ENCODE measurements at regions of chr12 and their contacts with region 1.

Region 1: DNA sequence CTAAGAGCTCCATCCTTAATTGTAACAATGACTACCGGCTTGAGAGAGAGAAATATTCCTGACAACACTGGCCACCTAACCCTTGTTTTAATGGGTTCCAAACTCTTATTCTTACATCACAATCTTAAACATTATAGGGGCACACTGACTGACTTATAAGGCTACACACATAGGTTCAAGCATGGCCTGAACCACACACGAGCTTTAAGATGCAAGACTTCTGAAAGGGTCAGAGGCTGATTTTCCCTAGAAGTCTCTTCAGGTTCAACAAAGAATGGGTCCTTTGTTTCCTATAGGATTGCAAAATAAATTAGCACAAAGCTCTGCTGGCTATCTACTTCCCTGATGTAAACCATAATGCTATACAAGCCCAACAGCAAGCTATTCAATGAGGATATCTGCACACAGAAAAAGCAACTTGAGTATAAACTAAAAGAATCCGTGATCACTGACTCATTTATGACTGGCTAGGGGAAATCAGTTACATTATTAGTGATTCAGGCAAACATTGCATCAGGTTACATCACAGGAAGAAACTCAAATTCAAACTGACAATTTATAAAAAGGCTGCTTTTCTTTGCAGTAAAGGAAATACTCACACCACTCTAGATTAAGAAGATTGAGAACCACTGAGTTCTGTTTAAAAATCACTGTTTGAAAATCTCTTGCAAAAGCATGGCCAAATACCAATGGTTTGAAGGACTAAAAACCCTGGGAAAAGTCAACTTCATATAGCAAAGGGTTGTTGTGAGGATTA is 8.5 kb downstream of the BTG1 start:
- DNase-seq: no peak
- ATAC-seq: no peak
- H3K4me3 Mint-ChIP-seq: peak overlapping the region; percentile 98
- H3K27ac Mint-ChIP-seq: peak overlapping the region; percentile 69
- H3K4me1 Mint-ChIP-seq: peaks cover 78% of the 10 kb centered on the region
- H3K27me3 Mint-ChIP-seq: no peaks in the 10 kb centered on the region
- CTCF ChIP-seq: no peak

Region 2: GRCh38 chr12:91811481-91812287 is 325.5 kb before region 1 on chr12:
- CTCF ChIA-PET with region 1: interaction called, 36 read pairs
- POLR2A ChIA-PET with region 1: interaction called, 4 read pairs
- intact Hi-C with region 1: no loop called
- DNase-seq: peak; percentile 57
- ATAC-seq: peak; percentile 71
- H3K4me3 Mint-ChIP-seq: no peak overlapping the region
- H3K27ac Mint-ChIP-seq: no peak overlapping the region
- H3K4me1 Mint-ChIP-seq: peaks cover 7% of the 10 kb centered on the region
- H3K27me3 Mint-ChIP-seq: no peaks in the 10 kb centered on the region
- CTCF ChIP-seq: no peak

Region 3: DNA sequence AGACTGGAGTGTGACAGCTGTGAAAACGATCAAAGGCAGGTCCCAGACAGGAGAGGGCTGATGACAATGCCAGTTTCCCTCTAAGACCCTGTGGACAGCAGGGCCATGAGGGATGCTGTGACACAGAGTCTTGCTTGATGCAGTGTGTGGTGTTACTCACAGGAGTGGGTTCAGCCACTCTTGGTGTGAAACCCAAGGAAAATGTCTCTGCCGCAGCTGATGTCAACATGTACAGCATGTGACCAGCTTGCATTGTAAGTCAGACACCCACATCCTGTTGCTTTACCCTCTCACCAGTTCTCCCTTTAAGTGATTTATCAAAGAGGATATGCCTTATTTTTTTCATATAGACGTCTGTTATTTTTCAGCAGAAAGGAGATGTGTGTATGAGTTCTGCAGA is 260.1 kb before region 1 on chr12:
- CTCF ChIA-PET with region 1: no interaction called
- POLR2A ChIA-PET with region 1: interaction called, 3 read pairs
- intact Hi-C with region 1: loop called (anchors 2 kb)
- DNase-seq: peak; percentile 25
- ATAC-seq: peak; percentile 89
- H3K4me3 Mint-ChIP-seq: peak overlapping the region; percentile 50
- H3K27ac Mint-ChIP-seq: peak overlapping the region; percentile 83
- H3K4me1 Mint-ChIP-seq: peaks cover 28% of the 10 kb centered on the region
- H3K27me3 Mint-ChIP-seq: no peaks in the 10 kb centered on the region
- CTCF ChIP-seq: no peak

Region 4: DNA sequence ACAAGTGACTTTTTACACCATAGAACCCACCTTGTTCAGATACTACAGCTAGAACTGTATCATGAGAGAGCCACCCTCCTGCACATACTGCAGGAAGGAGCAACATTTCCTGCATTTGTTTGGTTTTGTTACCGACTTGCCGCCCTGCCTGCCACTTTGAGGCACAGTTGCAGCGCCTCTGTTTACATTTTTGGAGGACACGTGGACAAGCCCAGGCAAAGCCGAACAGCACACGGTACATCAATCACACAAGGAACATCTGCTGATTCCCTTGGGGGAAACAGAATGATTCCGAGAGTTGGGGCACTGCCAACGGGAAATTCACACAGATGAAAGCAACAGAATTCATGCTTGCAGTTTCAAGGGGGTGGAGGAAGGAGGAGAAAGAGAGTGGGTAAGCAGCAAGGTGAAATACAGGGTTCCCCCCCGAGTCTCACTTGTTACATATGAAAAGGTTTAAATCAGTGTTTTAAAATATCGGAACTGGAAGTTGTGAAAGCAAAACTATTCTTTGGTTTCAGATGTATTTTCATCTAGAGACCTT is 102.2 kb before region 1 on chr12:
- CTCF ChIA-PET with region 1: no interaction called
- POLR2A ChIA-PET with region 1: interaction called, 13 read pairs
- intact Hi-C with region 1: loop called (anchors 1 kb)
- DNase-seq: peak; percentile 50
- ATAC-seq: peak; percentile 91
- H3K4me3 Mint-ChIP-seq: peak overlapping the region; percentile 67
- H3K27ac Mint-ChIP-seq: peak overlapping the region; percentile 86
- H3K4me1 Mint-ChIP-seq: peaks cover 65% of the 10 kb centered on the region
- H3K27me3 Mint-ChIP-seq: no peaks in the 10 kb centered on the region
- CTCF ChIP-seq: no peak

Region 5: DNA sequence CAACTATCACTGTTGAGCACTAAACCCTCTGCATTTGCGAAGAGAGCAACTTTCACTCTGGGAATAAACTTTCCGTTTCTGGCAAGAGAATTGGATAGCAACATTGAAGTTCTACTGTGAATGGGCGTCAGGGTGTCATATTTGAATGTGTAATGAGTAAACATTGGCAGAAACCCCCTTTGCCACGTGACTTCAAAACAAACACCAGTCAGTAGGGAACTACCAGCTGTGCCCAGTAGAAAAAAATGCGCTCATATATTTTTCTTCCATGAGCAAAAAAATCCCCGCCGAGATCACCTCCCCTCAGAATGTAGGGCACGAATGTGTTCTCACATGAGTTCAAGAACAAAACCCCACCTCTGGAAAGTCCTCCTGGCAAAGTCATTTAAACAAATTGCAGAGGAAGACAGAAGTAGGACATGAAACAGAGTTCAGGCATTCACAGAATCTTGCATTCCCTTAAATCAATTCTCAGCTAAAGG is 72.1 kb before region 1 on chr12:
- CTCF ChIA-PET with region 1: no interaction called
- POLR2A ChIA-PET with region 1: interaction called, 3 read pairs
- intact Hi-C with region 1: loop called (anchors 2 kb)
- DNase-seq: no peak
- ATAC-seq: peak; percentile 66
- H3K4me3 Mint-ChIP-seq: peak overlapping the region; percentile 73
- H3K27ac Mint-ChIP-seq: peak overlapping the region; percentile 85
- H3K4me1 Mint-ChIP-seq: peaks cover 61% of the 10 kb centered on the region
- H3K27me3 Mint-ChIP-seq: no peaks in the 10 kb centered on the region
- CTCF ChIP-seq: no peak

Region 6: GRCh38 chr12:92123780-92124688 is 13.1 kb before region 1 on chr12:
- CTCF ChIA-PET with region 1: no interaction called
- POLR2A ChIA-PET with region 1: interaction called, 19 read pairs
- intact Hi-C with region 1: loop called (anchors 2 kb)
- DNase-seq: no peak
- ATAC-seq: no peak
- H3K4me3 Mint-ChIP-seq: peak overlapping the region; percentile 1
- H3K27ac Mint-ChIP-seq: peak overlapping the region; percentile 70
- H3K4me1 Mint-ChIP-seq: peaks cover 42% of the 10 kb centered on the region
- H3K27me3 Mint-ChIP-seq: no peaks in the 10 kb centered on the region
- CTCF ChIP-seq: no peak

Region 7: GRCh38 chr12:92226071-92226661 is 89.0 kb after region 1 on chr12:
- CTCF ChIA-PET with region 1: no interaction called
- POLR2A ChIA-PET with region 1: no interaction called
- intact Hi-C with region 1: no loop called
- DNase-seq: no peak
- ATAC-seq: no peak
- H3K4me3 Mint-ChIP-seq: no peak overlapping the region
- H3K27ac Mint-ChIP-seq: no peak overlapping the region
- H3K4me1 Mint-ChIP-seq: no peaks in the 10 kb centered on the region
- H3K27me3 Mint-ChIP-seq: no peaks in the 10 kb centered on the region
- CTCF ChIP-seq: no peak

Region 8: DNA sequence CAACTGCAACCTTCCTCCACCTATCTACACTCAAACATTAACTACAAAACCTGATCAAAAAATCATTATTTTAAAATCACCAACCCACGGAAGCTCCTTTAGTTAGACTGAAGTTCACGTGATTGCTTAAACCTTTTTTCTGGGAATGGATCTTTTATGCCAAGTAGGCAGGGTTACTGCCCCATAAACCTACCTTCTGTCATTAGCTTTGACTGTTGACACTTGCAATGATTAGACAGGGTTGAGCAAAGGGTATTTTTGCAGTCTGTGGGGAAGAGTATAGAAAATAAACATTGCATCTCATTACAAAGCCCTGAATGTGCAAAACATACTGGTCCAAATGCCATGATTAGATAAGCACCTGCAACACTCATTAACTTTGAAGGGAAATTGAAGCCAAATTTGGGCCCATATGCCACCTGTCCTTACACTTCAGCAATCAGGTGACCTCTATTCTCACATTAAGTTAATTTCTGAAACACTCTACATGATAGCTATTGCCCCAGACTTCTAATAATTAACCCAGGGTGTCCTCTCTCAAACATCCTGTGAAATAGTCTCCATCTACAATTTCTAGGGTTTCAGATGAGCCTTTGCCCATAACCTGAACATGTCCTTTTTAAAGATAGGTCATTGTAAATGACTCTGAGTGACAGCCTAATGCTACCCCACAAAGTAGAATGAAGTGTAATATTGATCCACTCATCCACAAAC is 409.6 kb after region 1 on chr12:
- CTCF ChIA-PET with region 1: no interaction called
- POLR2A ChIA-PET with region 1: no interaction called
- intact Hi-C with region 1: no loop called
- DNase-seq: no peak
- ATAC-seq: no peak
- H3K4me3 Mint-ChIP-seq: no peak overlapping the region
- H3K27ac Mint-ChIP-seq: no peak overlapping the region
- H3K4me1 Mint-ChIP-seq: peaks cover 23% of the 10 kb centered on the region
- H3K27me3 Mint-ChIP-seq: no peaks in the 10 kb centered on the region
- CTCF ChIP-seq: no peak